ENCODE measurements at regions of chr22 and their contacts with region 1.

Region 1: GRCh38 chr22:37457093-37457893 is 28.9 kb downstream of the MFNG start:
- DNase-seq: peak; percentile 91
- ATAC-seq: peak; percentile 99
- H3K4me3 Mint-ChIP-seq: no peak overlapping the region
- H3K27ac Mint-ChIP-seq: no peak overlapping the region
- H3K4me1 Mint-ChIP-seq: no peaks in the 10 kb centered on the region
- H3K27me3 Mint-ChIP-seq: no peaks in the 10 kb centered on the region
- CTCF ChIP-seq: peak; percentile 94

Region 2: GRCh38 chr22:37267135-37267587 is 190.1 kb before region 1 on chr22:
- CTCF ChIA-PET with region 1: interaction called, 17 read pairs
- POLR2A ChIA-PET with region 1: no interaction called
- intact Hi-C with region 1: loop called (anchors 5 kb)
- DNase-seq: peak; percentile 75
- ATAC-seq: peak; percentile 96
- H3K4me3 Mint-ChIP-seq: peak overlapping the region; percentile 73
- H3K27ac Mint-ChIP-seq: peak overlapping the region; percentile 81
- H3K4me1 Mint-ChIP-seq: peaks cover 28% of the 10 kb centered on the region
- H3K27me3 Mint-ChIP-seq: no peaks in the 10 kb centered on the region
- CTCF ChIP-seq: peak; percentile 99

Region 3: GRCh38 chr22:37316875-37317371 is 140.4 kb before region 1 on chr22:
- CTCF ChIA-PET with region 1: interaction called, 98 read pairs
- POLR2A ChIA-PET with region 1: interaction called, 4 read pairs
- intact Hi-C with region 1: loop called (anchors 2 kb)
- DNase-seq: peak; percentile 82
- ATAC-seq: peak; percentile 82
- H3K4me3 Mint-ChIP-seq: no peak overlapping the region
- H3K27ac Mint-ChIP-seq: no peak overlapping the region
- H3K4me1 Mint-ChIP-seq: peaks cover 42% of the 10 kb centered on the region
- H3K27me3 Mint-ChIP-seq: no peaks in the 10 kb centered on the region
- CTCF ChIP-seq: peak; percentile 95

Region 4: GRCh38 chr22:37324340-37325038 is 132.8 kb before region 1 on chr22:
- CTCF ChIA-PET with region 1: interaction called, 10 read pairs
- POLR2A ChIA-PET with region 1: no interaction called
- intact Hi-C with region 1: no loop called
- DNase-seq: no peak
- ATAC-seq: no peak
- H3K4me3 Mint-ChIP-seq: no peak overlapping the region
- H3K27ac Mint-ChIP-seq: no peak overlapping the region
- H3K4me1 Mint-ChIP-seq: no peaks in the 10 kb centered on the region
- H3K27me3 Mint-ChIP-seq: peaks cover 27% of the 10 kb centered on the region
- CTCF ChIP-seq: no peak

Region 5: DNA sequence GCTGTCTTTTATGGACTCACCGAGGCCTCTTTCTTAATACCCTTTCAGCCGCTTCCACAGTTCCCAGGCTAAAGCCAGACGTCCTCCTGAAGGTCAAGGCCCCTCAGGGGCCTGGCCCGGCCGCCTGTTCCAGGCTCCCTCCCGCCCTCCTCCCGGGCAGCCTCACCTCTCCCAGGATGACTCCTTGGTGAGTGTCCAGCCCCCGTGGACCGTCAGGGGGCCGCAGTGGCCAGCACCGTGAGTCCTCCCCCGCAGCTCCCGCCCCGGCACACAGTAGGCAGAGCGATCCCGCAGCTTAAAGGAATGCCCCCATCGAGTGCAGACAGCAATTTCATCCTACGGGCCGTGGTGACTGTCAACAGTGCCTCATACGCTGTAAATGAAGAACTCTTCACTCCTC is 63.0 kb before region 1 on chr22:
- CTCF ChIA-PET with region 1: interaction called, 3 read pairs
- POLR2A ChIA-PET with region 1: interaction called, 3 read pairs
- intact Hi-C with region 1: loop called (anchors 10 kb)
- DNase-seq: no peak
- ATAC-seq: no peak
- H3K4me3 Mint-ChIP-seq: no peak overlapping the region
- H3K27ac Mint-ChIP-seq: no peak overlapping the region
- H3K4me1 Mint-ChIP-seq: no peaks in the 10 kb centered on the region
- H3K27me3 Mint-ChIP-seq: no peaks in the 10 kb centered on the region
- CTCF ChIP-seq: no peak

Region 6: GRCh38 chr22:37428649-37429586 is 28.4 kb before region 1 on chr22:
- CTCF ChIA-PET with region 1: interaction called, 14 read pairs
- POLR2A ChIA-PET with region 1: no interaction called
- intact Hi-C with region 1: no loop called
- DNase-seq: peak; percentile 75
- ATAC-seq: no peak
- H3K4me3 Mint-ChIP-seq: no peak overlapping the region
- H3K27ac Mint-ChIP-seq: no peak overlapping the region
- H3K4me1 Mint-ChIP-seq: peaks cover 23% of the 10 kb centered on the region
- H3K27me3 Mint-ChIP-seq: peaks cover 53% of the 10 kb centered on the region
- CTCF ChIP-seq: peak; percentile 88

Region 7: DNA sequence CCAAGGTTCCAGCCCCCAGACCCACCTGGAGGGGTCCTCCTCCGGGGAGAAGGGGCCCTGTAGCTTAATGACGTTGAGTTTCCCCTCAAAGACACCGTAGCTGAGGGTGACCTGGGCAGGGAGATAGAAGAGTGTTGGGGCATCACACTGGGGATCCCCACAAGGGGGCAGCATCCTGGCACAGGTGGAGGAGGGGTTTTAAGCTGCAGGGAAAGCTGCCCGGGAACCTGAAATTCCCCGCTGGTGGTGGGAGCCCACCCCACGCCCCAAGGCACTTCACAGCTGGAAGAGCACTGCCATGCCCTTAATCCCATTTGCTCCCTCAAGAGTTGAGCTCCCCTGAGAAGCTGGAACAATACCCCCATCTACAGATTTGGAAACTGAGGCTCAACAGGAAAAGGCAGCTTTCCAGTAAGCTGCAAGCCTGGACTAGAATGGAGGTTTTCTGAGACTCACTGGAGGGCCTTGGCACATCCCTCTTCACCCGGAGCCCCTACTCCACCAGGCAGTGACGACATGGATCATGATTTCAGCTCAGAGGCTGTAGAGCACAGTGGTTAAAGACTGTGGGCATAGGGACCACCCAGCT is 15.2 kb after region 1 on chr22:
- CTCF ChIA-PET with region 1: interaction called, 22 read pairs
- POLR2A ChIA-PET with region 1: interaction called, 5 read pairs
- intact Hi-C with region 1: no loop called
- DNase-seq: peak; percentile 48
- ATAC-seq: no peak
- H3K4me3 Mint-ChIP-seq: no peak overlapping the region
- H3K27ac Mint-ChIP-seq: peak overlapping the region; percentile 42
- H3K4me1 Mint-ChIP-seq: peaks cover 5% of the 10 kb centered on the region
- H3K27me3 Mint-ChIP-seq: no peaks in the 10 kb centered on the region
- CTCF ChIP-seq: peak; percentile 70